Lower leg skin (tissue), 4 donors: ENCODE measurements at regions of chr10 and their contacts with region 1.

Region 1: GRCh38 chr10:62244780-62245467 is 23.7 kb downstream of the RTKN2 start:
- DNase-seq: peak in 1 of 2 donors; percentile 56
- H3K4me3 ChIP-seq: no peak overlapping the region
- CTCF ChIP-seq: peak in 1 of 3 donors; percentile 25
- POLR2A ChIP-seq: no peak

Region 2: DNA sequence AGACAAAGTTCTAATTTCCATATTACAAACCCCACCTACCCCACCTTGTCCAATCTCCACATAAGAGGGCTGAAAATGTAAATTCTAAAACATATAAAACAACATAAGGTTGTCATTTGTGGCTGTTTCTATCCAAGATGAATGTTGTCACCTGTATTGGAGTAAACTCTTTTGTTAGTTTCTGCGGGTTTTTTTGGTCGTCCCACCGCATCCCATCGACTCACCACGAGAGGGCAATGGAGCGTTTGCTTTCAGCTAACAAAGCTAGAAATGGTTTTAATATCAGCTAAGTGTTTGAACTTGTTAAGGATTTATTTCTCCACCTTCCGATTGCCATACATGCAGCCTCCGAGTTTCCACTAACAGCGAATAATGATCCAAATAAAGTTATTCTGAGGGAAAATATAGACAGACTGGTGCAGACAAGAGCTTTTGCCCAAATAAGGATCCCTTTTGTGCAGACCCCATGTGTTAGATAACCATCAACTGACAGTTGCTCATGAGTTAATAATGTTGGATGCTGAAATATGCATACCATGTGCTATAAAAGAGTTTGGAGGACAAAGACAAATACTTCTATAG is 206.2 kb before region 1 on chr10:
- intact Hi-C with region 1: loop called (anchors 2 kb)
- DNase-seq: peak; percentile 70 to 94
- H3K4me3 ChIP-seq: no peak overlapping the region
- CTCF ChIP-seq: peak in 1 of 3 donors; percentile 72
- POLR2A ChIP-seq: no peak